ENCODE measurements at regions of chr10 and their contacts with region 1.

Region 1: DNA sequence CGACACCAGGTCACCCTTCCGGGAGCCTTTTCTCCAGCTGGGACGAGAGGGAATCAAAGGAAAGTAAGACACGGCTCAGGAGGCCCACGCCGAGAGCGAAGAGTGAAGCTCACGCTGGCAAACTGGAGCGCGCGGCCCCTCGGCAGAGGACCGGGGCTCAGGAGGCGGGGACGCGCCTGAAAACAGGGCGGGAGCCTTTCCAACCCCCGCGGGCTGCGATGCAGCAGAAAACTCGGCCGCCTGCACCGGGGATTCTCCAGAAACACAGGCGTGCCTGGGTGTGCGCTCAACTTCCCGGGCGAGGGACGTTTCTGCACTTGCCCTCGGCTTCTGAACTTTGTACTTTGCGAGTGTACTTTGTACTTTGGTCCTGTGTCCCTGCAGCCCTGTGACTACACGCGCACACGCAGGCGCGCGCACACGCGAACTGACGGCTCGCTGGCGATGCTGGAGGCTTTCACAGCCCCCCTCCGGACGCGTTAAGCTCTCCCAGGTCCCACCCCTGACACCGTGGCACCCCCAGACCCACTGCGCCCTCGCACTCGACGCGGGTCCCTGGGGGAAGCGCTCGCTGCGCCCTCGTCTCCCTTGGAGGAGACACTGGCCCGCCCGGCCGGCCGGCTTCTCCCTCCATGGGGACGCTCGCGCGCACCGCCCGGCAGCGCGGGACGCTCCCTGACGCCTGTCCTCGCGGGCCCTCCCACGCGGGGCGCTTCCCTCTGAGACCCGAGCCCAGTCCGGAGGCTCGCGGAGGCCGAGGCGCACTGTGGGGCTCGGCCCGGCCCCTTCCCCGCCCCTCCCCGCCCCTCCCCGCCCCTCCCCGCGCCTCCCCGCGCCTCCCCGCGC is 588 bp upstream of the PAOX start:
- DNase-seq: peak in 1 of 2 experiments; percentile 82
- H3K4me3 ChIP-seq: peak overlapping the region; percentile 47 to 82 (median 72)
- H3K27ac ChIP-seq: no peak overlapping the region
- H3K4me1 ChIP-seq: peaks cover 0 to 3% (median under 1%) of the 10 kb centered on the region in 4 experiments; a peak in 4 of 7 replicates
- H3K27me3 ChIP-seq: peaks cover 8 to 48% (median 30%) of the 10 kb centered on the region in 4 experiments
- CTCF ChIP-seq: no peak
- EP300 ChIP-seq: no peak
- POLR2A ChIP-seq: no peak
- RAD21 ChIP-seq: no peak

Region 2: DNA sequence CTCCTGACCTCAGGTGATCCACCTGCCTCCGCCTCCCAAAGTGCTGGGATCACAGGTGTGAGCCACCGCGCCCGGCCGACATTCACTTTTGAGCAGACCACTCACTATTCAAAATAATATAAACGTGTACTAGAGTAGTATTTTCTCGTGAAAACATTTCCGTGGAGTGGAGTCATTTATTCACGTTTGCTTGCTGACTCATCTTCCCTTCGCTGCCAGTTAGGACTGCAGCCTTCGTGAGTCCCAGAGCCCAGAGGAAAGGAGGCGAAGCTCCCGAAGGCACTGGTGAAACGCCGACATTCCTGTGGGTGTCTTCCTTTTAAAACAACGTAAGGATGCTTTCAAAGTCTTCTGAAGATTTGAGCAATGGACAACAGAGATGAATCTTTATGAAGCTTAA is 851.8 kb before region 1 on chr10:
- CTCF ChIA-PET with region 1: no interaction called
- POLR2A ChIA-PET with region 1: no interaction called
- DNase-seq: no peak
- H3K4me3 ChIP-seq: no peak overlapping the region
- H3K27ac ChIP-seq: no peak overlapping the region
- H3K4me1 ChIP-seq: no peaks in the 10 kb centered on the region
- H3K27me3 ChIP-seq: peaks cover 0 to 8% (median 3%) of the 10 kb centered on the region in 4 experiments; a peak in 4 of 7 replicates
- CTCF ChIP-seq: no peak
- EP300 ChIP-seq: no peak
- POLR2A ChIP-seq: no peak
- RAD21 ChIP-seq: no peak

Region 3: DNA sequence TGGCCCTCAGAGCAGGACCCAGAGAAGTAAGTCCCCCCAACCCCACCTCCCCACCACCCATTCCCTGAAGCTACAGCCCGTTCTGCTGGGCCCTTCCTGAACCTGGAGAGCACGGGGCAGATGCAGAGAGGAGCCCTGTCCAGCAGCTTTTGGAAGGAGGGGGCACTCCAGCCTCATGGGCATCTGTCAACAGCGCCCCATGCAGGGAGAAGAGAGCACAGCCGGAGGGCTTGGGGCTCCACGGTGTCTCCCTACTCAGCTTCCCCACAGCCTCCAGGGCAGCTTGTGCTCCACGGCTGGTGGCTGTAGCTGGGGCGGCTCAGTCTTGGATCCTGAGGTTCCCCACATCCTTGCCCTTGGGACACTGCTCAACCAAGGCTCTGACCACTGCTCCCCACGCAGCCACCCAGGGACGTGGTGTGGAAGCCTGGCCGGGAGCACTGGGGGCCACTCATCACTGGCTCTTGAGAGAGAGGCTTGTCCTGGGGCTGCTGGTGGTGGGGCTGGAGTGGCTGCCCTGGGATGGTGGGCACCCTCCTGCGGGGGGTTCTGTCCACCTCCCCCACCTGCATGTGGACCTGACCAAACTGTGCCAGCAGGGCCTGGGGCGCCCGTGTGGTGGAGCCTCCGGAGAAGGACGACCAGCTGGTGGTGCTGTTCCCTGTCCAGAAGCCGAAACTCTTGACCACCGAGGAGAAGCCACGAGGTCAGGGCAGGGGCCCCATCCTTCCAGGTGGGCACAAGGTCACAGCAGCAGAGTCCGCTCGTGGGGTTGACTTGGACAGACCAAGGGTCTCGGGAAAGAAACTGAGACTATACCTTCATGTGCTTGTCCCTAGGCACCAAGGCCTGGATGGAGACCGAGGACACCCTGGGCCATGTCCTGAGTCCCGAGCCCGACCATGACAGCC is 26.8 kb before region 1 on chr10:
- CTCF ChIA-PET with region 1: interaction called, 11 read pairs
- POLR2A ChIA-PET with region 1: interaction called, 9 read pairs
- DNase-seq: peak in 1 of 2 experiments; percentile 65
- H3K4me3 ChIP-seq: no peak overlapping the region
- H3K27ac ChIP-seq: no peak overlapping the region
- H3K4me1 ChIP-seq: peaks cover 0 to 21% (median 3%) of the 10 kb centered on the region in 4 experiments; a peak in 5 of 7 replicates
- H3K27me3 ChIP-seq: no peaks in the 10 kb centered on the region; a peak in 1 of 7 replicates
- CTCF ChIP-seq: peak in 2 of 3 experiments; percentile 57 to 59; a peak in 3 of 4 replicates
- EP300 ChIP-seq: no peak
- POLR2A ChIP-seq: no peak
- RAD21 ChIP-seq: peak; percentile 34 to 42; a peak in 3 of 4 replicates

Region 4: GRCh38 chr10:133357285-133358151 is 21.0 kb before region 1 on chr10 and contains the start of gene FUOM:
- CTCF ChIA-PET with region 1: interaction called, 11 read pairs
- POLR2A ChIA-PET with region 1: interaction called, 12 read pairs
- DNase-seq: peak; percentile 67 to 95
- H3K4me3 ChIP-seq: peak within 1 kb of the TSS; percentile 51 to 78 (median 68)
- H3K27ac ChIP-seq: no peak within 1 kb of the TSS; the same call in 1 of the 2 replicates
- H3K4me1 ChIP-seq: peaks cover 0 to 6% (median 3%) of the 10 kb centered on the region in 4 experiments; a peak in 4 of 7 replicates
- H3K27me3 ChIP-seq: peaks cover 0 to 19% (median 7%) of the 10 kb centered on the region in 4 experiments; a peak in 5 of 7 replicates
- CTCF ChIP-seq: no peak
- EP300 ChIP-seq: no peak
- POLR2A ChIP-seq: peak in 1 of 2 experiments; percentile 80; a peak in 2 of 3 replicates
- RAD21 ChIP-seq: no peak
- total RNA-seq, gene FUOM: 21.1 and 22.0 TPM in 2 replicates

Region 5: DNA sequence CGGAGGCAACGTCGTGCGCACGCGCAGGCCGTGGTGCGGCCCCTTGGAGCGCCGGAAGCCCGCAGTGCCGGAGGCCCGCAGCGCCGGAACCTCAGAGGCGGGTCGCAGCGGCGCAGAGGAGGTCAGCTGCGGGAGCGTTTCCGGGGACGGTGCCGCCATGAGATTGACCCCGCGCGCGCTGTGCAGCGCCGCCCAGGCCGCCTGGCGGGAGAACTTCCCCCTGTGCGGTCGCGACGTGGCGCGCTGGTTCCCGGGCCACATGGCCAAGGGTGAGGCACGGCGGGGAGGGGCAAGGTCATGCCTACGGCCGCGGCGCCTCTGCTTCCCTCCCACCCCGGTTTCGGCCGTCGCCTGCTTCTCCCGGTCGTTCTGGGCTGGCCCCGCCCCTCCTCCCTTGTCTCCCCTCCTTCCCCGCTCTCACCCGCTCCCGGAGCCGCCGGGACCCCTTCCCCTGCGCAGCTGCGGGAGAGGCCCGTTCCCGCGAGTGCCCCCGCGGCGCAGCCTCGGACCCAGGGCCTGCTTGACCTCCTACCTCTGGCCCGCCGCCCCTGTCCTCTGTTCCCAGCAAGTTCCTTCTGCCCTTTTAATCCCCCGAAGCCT is 15.7 kb after region 1 on chr10 and contains the start of gene MTG1:
- CTCF ChIA-PET with region 1: no interaction called
- POLR2A ChIA-PET with region 1: interaction called, 25 read pairs
- DNase-seq: peak; percentile 25 to 99
- H3K4me3 ChIP-seq: peak within 1 kb of the TSS; percentile 75 to 93 (median 92)
- H3K27ac ChIP-seq: peak within 1 kb of the TSS; percentile 91
- H3K4me1 ChIP-seq: peaks cover 0 to 3% (median 0%) of the 10 kb centered on the region in 4 experiments; a peak in 3 of 7 replicates
- H3K27me3 ChIP-seq: no peaks in the 10 kb centered on the region
- CTCF ChIP-seq: peak in 1 of 3 experiments; percentile 3; a peak in 1 of 4 replicates
- EP300 ChIP-seq: no peak; a peak in 1 of 3 replicates
- POLR2A ChIP-seq: peak; percentile 91 to 96
- RAD21 ChIP-seq: no peak
- total RNA-seq, gene MTG1: 56.6 and 57.8 TPM in 2 replicates

Region 6: GRCh38 chr10:133616371-133617130 is 238.1 kb after region 1 on chr10:
- CTCF ChIA-PET with region 1: no interaction called
- POLR2A ChIA-PET with region 1: no interaction called
- DNase-seq: no peak
- H3K4me3 ChIP-seq: no peak overlapping the region
- H3K27ac ChIP-seq: no peak overlapping the region
- H3K4me1 ChIP-seq: no peaks in the 10 kb centered on the region
- H3K27me3 ChIP-seq: no peaks in the 10 kb centered on the region
- CTCF ChIP-seq: no peak
- EP300 ChIP-seq: no peak
- POLR2A ChIP-seq: no peak
- RAD21 ChIP-seq: no peak

Measured in H1 (cell line).